ENCODE measurements at regions of chr12 and their contacts with region 1.

Region 1: DNA sequence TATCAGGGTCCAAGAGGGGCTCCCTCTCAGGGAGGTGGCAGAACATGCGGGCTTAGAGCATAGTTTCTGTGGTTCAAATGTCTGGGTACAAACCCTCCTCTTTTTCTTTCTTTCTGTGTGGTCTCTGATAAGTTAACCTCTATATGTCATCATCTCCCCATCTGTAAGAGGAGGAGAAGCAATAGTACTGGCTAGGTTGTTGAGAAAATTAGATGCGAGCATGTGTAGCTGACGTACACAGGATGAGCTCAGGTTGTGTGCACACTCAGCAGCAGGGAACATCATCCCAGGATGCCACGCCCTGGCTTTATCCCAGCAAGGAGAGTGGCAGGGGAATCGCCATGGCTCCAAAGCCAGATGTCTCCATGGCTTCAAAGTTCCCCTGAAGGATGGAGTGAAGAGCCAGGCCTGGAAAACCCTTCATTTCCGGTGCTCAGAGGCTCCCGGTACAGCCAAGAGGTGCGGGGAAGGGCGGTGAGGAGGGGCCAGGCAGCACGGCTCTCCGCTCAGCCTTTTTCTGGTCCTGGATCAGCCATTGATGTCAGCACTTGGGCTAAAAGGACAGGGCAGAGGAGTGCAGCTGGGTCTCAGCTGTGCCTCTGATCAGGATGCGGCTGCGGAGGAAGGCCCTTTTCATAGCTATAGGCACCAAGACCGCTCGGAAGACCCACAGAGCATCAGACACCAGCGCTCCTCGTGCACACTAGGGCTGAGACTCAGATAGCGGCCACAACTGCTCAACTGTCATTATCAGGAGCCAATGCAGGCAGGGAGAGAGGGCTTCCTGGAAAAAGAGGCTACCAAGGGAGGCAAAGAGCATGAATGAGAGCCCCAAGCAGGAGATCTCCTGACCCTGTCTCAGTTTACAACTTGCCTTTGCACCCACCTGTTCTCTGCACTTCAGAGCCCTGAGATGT is 41.5 kb downstream of the ARL6IP4 start:
- DNase-seq: no peak
- ATAC-seq: no peak
- H3K4me3 ChIP-seq: no peak overlapping the region
- H3K27ac ChIP-seq: no peak overlapping the region
- H3K4me1 ChIP-seq: peaks cover 17% of the 10 kb centered on the region
- H3K27me3 ChIP-seq: no peaks in the 10 kb centered on the region
- CTCF ChIP-seq: no peak
- EP300 ChIP-seq: no peak
- POLR2A ChIP-seq: no peak
- RAD21 ChIP-seq: no peak

Region 2: GRCh38 chr12:122980183-122981046 is 41.5 kb before region 1 on chr12 and contains the start of gene ARL6IP4:
- CTCF ChIA-PET with region 1: no interaction called
- POLR2A ChIA-PET with region 1: interaction called, 9 read pairs
- in situ Hi-C with region 1: no loop called
- intact Hi-C with region 1: loop called (anchors 2 kb)
- DNase-seq: no peak
- ATAC-seq: peak; percentile 48
- H3K4me3 ChIP-seq: peak within 1 kb of the TSS; percentile 87 to 99 (median 97)
- H3K27ac ChIP-seq: peak within 1 kb of the TSS; percentile 93
- H3K4me1 ChIP-seq: peaks cover 80% of the 10 kb centered on the region
- H3K27me3 ChIP-seq: no peaks in the 10 kb centered on the region; a peak in 1 of 5 replicates
- CTCF ChIP-seq: no peak; the same call in 1 of the 2 replicates
- EP300 ChIP-seq: no peak
- POLR2A ChIP-seq: peak in 1 of 2 experiments; percentile 25; a peak in 1 of 4 replicates
- RAD21 ChIP-seq: no peak; the same call in 1 of the 2 replicates
- total RNA-seq, gene ARL6IP4: 178 and 220 TPM in 2 replicates

Region 3: DNA sequence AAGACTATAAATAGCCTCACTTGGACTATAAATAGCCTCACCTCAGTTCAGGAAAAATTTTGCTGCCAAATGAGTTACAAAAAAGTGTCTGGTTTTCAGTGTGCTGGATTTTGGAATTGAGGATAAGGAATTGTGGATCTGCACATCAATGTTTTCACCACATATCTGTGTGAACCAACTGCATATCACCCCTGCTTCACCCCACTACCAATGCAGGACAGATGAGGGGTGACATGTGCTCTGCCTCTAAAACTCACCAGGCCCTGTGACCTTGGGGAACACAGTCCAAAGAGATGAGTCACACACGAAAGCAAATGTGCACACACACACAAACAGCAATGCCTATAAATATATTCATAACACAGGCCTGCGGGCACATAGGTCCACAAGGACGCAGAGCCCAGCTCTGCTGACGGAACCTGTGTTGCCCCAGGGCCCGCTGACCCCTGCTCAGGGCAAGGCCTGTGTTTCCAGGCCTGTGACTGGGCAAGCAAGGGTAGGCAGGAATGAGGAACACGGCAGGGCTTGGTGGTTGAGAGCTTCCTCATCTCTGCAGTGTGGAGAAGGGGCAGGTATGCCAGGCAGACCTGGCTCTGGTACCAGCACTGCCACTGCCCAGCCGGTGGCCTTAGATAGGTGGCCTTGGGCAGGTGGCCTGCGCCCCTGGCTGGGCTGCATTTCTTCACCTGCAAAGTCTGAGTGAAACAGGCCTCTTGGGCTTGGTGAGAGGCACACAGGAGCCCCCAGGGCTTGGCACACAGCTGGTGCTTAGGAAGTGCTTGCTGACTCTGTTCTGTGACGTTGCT is 40.9 kb after region 1 on chr12:
- CTCF ChIA-PET with region 1: no interaction called
- POLR2A ChIA-PET with region 1: interaction called, 4 read pairs
- in situ Hi-C with region 1: no loop called
- intact Hi-C with region 1: loop called (anchors 2 kb)
- DNase-seq: peak; percentile 91
- ATAC-seq: peak; percentile 93
- H3K4me3 ChIP-seq: peak overlapping the region in 1 of 3 experiments; percentile 53; a peak in 2 of 6 replicates
- H3K27ac ChIP-seq: peak overlapping the region; percentile 92
- H3K4me1 ChIP-seq: peaks cover 33% of the 10 kb centered on the region
- H3K27me3 ChIP-seq: no peaks in the 10 kb centered on the region
- CTCF ChIP-seq: no peak
- EP300 ChIP-seq: peak in 1 of 2 experiments; percentile 65; a peak in 1 of 4 replicates
- POLR2A ChIP-seq: peak in 1 of 2 experiments; percentile 62; a peak in 1 of 4 replicates
- RAD21 ChIP-seq: peak; percentile 19; the same call in 1 of the 2 replicates